ENCODE measurements at regions of chr16 and their contacts with region 1.

Region 1: DNA sequence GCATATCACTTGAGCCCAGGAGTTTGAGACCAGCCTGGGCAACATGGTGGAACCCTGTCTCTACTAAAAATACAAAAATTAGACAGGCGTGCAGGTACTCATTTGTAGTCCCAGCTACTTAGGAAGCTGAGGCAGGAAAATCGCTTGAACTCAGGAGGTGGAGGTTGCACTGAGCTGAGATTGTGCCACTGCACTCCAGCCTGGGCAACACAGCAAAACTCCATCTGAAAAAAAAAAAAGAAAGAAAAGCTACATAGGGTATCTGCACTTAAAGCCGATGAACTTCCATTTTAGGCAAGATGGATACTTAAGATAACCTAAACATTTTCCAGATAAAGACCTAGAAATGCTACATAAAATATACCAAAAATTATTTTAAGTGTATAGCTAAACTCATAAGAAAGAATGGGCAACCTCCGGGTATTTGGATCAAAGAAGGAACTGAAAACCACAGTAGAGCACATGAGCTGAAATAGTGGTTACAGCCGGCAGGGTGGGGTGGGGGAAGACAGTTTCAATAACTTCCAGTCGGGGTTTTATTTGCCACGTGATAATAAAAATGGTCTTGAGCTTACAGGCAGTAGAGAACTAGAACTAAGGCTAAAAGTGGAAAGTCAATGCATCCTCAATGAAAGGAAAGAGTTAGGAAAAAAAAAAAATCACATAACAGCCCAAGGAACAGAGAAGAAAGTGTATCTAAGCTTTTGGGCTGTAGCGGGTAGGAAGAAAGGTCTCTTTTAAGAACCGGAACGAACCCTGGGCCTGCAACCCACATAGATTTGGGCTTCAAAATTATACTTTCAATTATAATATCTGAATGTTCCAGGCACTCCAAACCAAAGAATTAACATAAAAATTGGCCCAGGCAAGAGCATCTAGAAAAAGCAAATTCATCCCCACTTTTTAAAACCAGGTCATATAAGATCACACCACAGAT is 53.1 kb downstream of the CFDP1 start:
- DNase-seq: no peak
- H3K4me3 ChIP-seq: no peak overlapping the region
- H3K27ac ChIP-seq: no peak overlapping the region
- H3K4me1 ChIP-seq: peaks cover 46% of the 10 kb centered on the region
- H3K27me3 ChIP-seq: no peaks in the 10 kb centered on the region
- CTCF ChIP-seq: no peak

Region 2: DNA sequence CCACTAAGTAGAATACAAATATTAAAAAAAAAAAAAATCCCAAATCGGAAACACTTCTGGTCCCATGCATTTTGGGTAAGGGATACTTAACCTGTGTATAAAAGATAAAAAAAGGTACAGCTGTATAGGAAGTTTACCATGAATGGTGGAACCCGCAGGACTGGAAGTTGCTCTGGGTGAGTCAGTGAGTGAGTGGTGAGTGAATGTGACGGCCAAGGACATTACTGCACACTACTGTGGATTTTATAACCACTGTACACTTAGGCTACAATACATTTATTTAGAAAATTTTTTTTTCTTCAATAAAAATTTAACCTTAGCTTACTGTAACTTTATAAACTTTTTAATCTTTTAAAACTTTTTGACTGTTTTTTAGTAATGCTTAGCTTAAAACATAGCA is 57.4 kb before region 1 on chr16:
- CTCF ChIA-PET with region 1: no interaction called
- dilution Hi-C with region 1: no loop called
- in situ Hi-C with region 1: no loop called
- intact Hi-C with region 1: loop called (anchors 1 kb)
- DNase-seq: peak; percentile 68
- H3K4me3 ChIP-seq: no peak overlapping the region
- H3K27ac ChIP-seq: peak overlapping the region; percentile 80
- H3K4me1 ChIP-seq: peaks cover 53% of the 10 kb centered on the region
- H3K27me3 ChIP-seq: no peaks in the 10 kb centered on the region
- CTCF ChIP-seq: no peak